OCI-LY7 (cell line): ENCODE measurements at regions of chr6 and their contacts with region 1.

Region 1: GRCh38 chr6:104639668-104640067 is 220.1 kb downstream of the HACE1 start:
- DNase-seq: peak; percentile 72
- H3K4me3 ChIP-seq: peak overlapping the region; percentile 48
- H3K27ac ChIP-seq: peak overlapping the region; percentile 99
- H3K4me1 ChIP-seq: peaks cover 74% of the 10 kb centered on the region
- CTCF ChIP-seq: no peak

Region 2: GRCh38 chr6:104623052-104623690 is 16.5 kb before region 1 on chr6:
- CTCF ChIA-PET with region 1: no interaction called
- POLR2A ChIA-PET with region 1: interaction called, 15 read pairs
- intact Hi-C with region 1: no loop called
- DNase-seq: peak; percentile 75
- H3K4me3 ChIP-seq: peak overlapping the region; percentile 29
- H3K27ac ChIP-seq: no peak overlapping the region
- H3K4me1 ChIP-seq: peaks cover 35% of the 10 kb centered on the region
- CTCF ChIP-seq: peak; percentile 55

Region 3: DNA sequence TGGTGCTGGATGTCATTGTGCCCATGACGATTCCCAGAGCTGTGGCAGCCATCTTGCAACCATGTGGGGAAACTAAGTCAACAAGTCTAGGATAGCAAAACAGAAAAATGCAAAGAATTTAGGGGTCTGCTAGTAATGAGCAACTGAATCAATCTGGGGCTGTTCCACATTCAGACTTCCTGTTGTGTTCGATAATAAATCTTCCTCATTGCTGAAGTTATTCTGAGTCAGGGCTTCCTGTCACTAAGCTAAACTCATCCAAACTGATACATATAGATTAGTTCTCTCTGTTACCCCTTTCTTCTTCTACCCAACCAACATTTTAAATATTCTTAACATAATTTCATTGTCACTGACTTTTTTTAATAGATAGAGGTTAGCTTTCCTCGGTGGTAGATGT is 14.1 kb after region 1 on chr6:
- CTCF ChIA-PET with region 1: interaction called, 5 read pairs
- POLR2A ChIA-PET with region 1: interaction called, 54 read pairs
- intact Hi-C with region 1: no loop called
- DNase-seq: peak; percentile 33
- H3K4me3 ChIP-seq: peak overlapping the region; percentile 7
- H3K27ac ChIP-seq: no peak overlapping the region
- H3K4me1 ChIP-seq: peaks cover 31% of the 10 kb centered on the region
- CTCF ChIP-seq: no peak

Region 4: GRCh38 chr6:104659053-104659452 is 19.4 kb after region 1 on chr6:
- CTCF ChIA-PET with region 1: interaction called, 5 read pairs
- POLR2A ChIA-PET with region 1: interaction called, 54 read pairs
- intact Hi-C with region 1: no loop called
- DNase-seq: no peak
- H3K4me3 ChIP-seq: no peak overlapping the region
- H3K27ac ChIP-seq: no peak overlapping the region
- H3K4me1 ChIP-seq: peaks cover 35% of the 10 kb centered on the region
- CTCF ChIP-seq: no peak

Region 5: GRCh38 chr6:104682722-104683643 is 43.3 kb after region 1 on chr6:
- CTCF ChIA-PET with region 1: no interaction called
- POLR2A ChIA-PET with region 1: interaction called, 3 read pairs
- intact Hi-C with region 1: loop called (anchors 2 kb)
- DNase-seq: peak; percentile 63
- H3K4me3 ChIP-seq: no peak overlapping the region
- H3K27ac ChIP-seq: no peak overlapping the region
- H3K4me1 ChIP-seq: peaks cover 21% of the 10 kb centered on the region
- CTCF ChIP-seq: peak; percentile 99

Region 6: GRCh38 chr6:104771258-104771832 is 131.7 kb after region 1 on chr6:
- CTCF ChIA-PET with region 1: no interaction called
- POLR2A ChIA-PET with region 1: interaction called, 3 read pairs
- intact Hi-C with region 1: loop called (anchors 5 kb)
- DNase-seq: peak; percentile 53
- H3K4me3 ChIP-seq: no peak overlapping the region
- H3K27ac ChIP-seq: no peak overlapping the region
- H3K4me1 ChIP-seq: no peaks in the 10 kb centered on the region
- CTCF ChIP-seq: peak; percentile 96

Region 7: DNA sequence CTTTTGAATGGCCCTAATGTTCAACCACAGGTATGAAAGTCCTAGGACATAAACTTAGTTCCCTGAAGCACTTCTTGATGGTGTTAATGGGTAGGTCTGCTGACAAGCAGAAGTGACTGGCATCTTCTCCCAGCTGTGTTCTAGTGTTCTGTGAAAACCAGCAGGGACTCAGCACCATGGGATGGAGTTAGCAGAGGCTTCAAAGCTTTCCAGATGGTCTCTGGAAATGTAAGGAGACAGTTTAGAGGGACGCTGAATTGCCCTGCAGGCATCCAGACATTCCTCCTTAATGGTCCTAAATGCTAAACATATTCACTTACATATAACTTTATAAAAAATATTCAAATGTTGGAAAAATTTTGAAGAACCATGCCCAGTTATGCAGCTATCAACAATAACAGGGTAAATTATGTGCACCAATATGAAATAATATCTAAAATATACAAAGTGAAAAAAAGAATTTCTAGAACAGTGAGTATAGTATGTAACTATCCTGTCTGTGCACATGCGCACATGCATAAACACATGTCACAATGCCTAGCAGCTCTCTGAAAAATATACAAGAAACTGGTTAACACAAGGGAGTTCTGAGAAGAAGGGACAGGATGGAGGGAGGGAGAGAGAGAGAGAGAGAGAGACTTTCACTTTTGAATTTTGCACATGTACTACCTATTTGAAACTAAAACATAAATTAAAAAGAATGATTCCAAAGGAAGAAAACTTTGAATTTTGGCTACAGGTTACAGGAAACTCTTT is 1533.6 kb after region 1 on chr6:
- CTCF ChIA-PET with region 1: no interaction called
- POLR2A ChIA-PET with region 1: no interaction called
- intact Hi-C with region 1: loop called (anchors 10 kb)
- DNase-seq: no peak
- H3K4me3 ChIP-seq: no peak overlapping the region
- H3K27ac ChIP-seq: no peak overlapping the region
- H3K4me1 ChIP-seq: no peaks in the 10 kb centered on the region
- CTCF ChIP-seq: no peak